Heart left ventricle (tissue), 16 donors: ENCODE measurements at regions of chr2 and their contacts with region 1.

Region 1: GRCh38 chr2:219530048-219530963 is 13.3 kb downstream of the CHPF start:
- DNase-seq: peak; percentile 82 to 92 (median 84)
- ATAC-seq: peak; percentile 69 to 88 (median 82)
- H3K4me3 ChIP-seq: peak overlapping the region in 3 of 12 donors; percentile 15 to 40 (median 26)
- H3K27ac ChIP-seq: no peak overlapping the region
- H3K4me1 ChIP-seq: peaks cover 0 to 26% (median 13%) of the 10 kb centered on the region in 12 donors
- H3K27me3 ChIP-seq: peaks cover 0 to 48% (median 11%) of the 10 kb centered on the region in 9 donors
- CTCF ChIP-seq: peak; percentile 92 to 98 (median 95)
- POLR2A ChIP-seq: no peak

Region 2: DNA sequence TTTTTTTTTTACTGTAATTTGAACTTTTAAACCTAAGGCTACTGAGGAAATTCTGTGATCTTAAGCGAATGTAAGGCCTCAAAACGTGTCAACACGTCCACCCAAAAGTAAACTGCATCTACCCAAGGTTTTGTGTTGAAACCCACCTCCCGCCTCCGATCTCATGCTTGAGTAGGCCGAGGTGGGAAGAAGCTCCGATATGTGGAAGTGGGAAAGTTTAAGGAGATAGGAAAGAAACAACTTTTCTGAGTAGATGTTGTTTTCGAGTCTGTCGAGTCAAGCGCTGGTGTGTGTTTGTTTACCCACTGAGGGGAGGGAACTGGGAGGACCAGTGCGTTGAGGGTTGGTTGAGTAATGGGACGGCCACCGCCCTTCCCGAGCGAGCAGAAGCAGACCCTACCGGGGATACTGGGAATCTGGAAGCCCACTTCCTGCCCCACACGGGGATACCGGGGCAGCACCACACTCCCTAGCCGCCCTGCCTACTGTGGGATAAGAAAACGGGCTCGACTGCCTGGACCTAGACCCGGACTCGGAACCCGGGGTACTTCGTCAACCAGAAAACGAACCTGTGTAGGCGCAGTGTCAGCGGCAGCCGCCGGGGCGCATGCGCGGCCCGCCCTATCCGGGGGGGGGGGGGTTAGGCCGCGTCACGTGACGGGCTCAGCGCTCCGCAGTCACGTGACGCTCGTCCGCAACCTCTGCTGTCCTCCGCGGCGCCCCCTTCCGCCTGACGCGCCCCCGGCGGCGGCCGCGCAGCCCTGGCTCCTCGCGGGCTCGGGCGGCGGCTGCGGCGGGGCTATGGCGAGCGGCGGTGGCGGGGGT is 352.5 kb before region 1 on chr2 and contains the start of gene RETREG2:
- intact Hi-C with region 1: no loop called
- DNase-seq: peak; percentile 86 to 93 (median 89)
- ATAC-seq: peak; percentile 71 to 86 (median 78)
- H3K4me3 ChIP-seq: peak within 1 kb of the TSS; percentile 58 to 99 (median 92)
- H3K27ac ChIP-seq: peak within 1 kb of the TSS; percentile 96 to 100 (median 98)
- H3K4me1 ChIP-seq: peaks cover 5 to 54% (median 27%) of the 10 kb centered on the region in 12 donors
- H3K27me3 ChIP-seq: no peaks in the 10 kb centered on the region
- CTCF ChIP-seq: peak in 10 of 12 donors; percentile 11 to 67 (median 50)
- POLR2A ChIP-seq: peak; percentile 33 to 94
- total RNA-seq, gene RETREG2: 28.3 to 55.8 (median 38.2) TPM

Region 3: GRCh38 chr2:219459460-219460311 is 70.6 kb before region 1 on chr2:
- intact Hi-C with region 1: loop called in 4 of 10 experiments (anchors 1 to 5 kb)
- DNase-seq: peak; percentile 68 to 82 (median 78)
- ATAC-seq: peak; percentile 49 to 69 (median 64)
- H3K4me3 ChIP-seq: peak overlapping the region in 1 of 12 donors; percentile 17
- H3K27ac ChIP-seq: peak overlapping the region; percentile 66 to 99 (median 92)
- H3K4me1 ChIP-seq: peaks cover 0 to 68% (median 12%) of the 10 kb centered on the region in 12 donors
- H3K27me3 ChIP-seq: peaks cover 0 to 9% (median 0%) of the 10 kb centered on the region in 9 donors
- CTCF ChIP-seq: peak; percentile 77 to 90 (median 86)
- POLR2A ChIP-seq: no peak

Region 4: DNA sequence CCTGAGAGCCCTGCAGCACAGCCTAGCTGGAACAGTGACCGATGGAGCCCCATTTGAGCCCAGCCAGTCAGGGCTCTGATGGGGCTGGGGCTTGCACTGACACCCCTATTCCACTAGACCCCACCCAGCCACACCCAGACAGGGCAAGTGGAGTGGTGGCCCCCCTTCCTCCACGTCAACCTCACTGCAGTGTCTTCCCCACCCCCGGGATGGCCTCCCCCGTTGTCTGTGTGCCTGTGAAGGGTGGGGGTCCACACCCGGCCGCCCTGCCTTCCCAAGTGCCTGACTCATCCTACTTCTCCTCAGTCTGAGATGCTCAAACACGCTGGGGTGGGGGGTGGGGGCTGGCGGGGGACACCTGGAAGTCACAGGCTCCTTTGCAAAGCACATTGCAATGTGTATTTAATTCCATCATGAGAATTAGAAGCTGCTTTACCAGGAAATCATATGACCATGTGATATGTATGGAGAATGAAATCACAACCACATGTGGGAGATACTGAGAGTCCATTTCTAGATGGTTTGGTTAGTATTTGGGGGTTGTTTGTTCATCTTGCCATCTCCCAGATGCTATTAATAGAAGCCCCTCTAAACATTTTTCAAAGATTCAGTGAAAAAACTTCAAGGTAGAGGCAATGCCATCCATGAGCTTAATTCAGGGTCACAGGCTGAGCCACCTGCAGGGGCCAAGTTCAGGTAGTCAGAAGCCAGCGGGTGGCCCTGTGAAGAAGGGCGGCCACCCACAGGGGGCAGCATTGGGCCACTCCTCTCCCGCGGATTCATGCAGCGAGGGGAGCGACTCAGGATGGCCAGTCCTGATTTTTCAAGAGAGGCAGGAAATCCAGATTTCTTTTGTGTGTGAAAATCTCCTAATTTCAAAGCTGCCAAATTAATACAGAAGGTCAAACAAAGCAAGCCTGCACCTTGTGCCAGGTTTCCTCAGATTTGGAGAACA is 54.3 kb before region 1 on chr2:
- intact Hi-C with region 1: loop called in 9 of 10 experiments (anchors 1 to 5 kb)
- DNase-seq: peak in 4 of 5 donors; percentile 67 to 79 (median 68)
- ATAC-seq: peak in 3 of 4 donors; percentile 31 to 67 (median 60)
- H3K4me3 ChIP-seq: no peak overlapping the region
- H3K27ac ChIP-seq: peak overlapping the region in 7 of 12 donors; percentile 25 to 72 (median 63)
- H3K4me1 ChIP-seq: peaks cover 0 to 31% (median 0%) of the 10 kb centered on the region in 12 donors
- H3K27me3 ChIP-seq: no peaks in the 10 kb centered on the region
- CTCF ChIP-seq: peak; percentile 79 to 90 (median 86)
- POLR2A ChIP-seq: no peak

Region 5: GRCh38 chr2:219490186-219490585 is 40.1 kb before region 1 on chr2:
- intact Hi-C with region 1: loop called in 4 of 10 experiments (anchors 1 to 5 kb)
- DNase-seq: no peak
- ATAC-seq: no peak
- H3K4me3 ChIP-seq: no peak overlapping the region
- H3K27ac ChIP-seq: peak overlapping the region in 3 of 12 donors; percentile 24 to 60 (median 54)
- H3K4me1 ChIP-seq: peaks cover 0 to 45% (median 2%) of the 10 kb centered on the region in 12 donors
- H3K27me3 ChIP-seq: peaks cover 0 to 27% (median 3%) of the 10 kb centered on the region in 9 donors
- CTCF ChIP-seq: peak in 1 of 12 donors; percentile 15
- POLR2A ChIP-seq: no peak

Region 6: DNA sequence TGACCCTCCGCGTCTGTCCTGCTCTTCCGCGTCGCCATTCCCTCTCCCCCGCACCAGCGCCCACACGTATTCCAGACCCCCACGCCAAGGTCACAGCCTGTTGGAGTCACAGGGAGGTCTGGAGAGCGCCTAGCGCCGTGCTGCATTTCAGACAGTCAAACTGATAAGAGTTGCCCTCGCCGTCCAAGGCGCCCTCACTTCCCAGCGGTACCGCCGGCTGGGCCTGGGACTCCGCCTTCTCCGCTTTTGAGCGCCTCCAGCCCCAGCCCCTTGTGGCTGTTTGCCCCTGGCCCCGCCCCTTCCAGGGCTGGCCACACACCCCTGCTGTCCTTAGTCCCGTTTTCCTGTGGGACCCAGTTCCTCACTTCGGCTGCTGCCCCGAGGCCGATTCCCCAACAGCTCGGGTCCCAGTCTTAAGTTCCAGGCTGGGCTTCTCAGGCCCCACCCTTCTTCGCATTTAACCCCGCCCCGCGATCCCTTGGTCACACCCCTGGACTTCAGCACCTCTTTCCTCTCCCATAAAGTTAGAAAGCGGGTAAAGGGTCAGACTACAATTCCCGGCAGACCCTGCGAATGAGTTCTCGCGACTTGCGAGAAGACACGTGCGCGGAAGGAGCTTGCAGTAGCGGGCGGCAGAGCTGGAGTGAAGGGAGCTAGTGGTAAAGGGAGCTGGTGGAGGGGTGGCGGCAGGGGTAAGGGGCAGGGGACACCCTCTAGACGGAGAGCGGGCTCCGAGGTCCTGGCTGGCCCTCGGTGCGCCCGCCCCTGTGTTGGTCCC is 31.8 kb before region 1 on chr2 and contains the start of gene GMPPA:
- intact Hi-C with region 1: loop called in 4 of 10 experiments (anchors 1 to 5 kb)
- DNase-seq: peak; percentile 96 to 98 (median 96)
- ATAC-seq: peak; percentile 86 to 94 (median 88)
- H3K4me3 ChIP-seq: peak within 1 kb of the TSS; percentile 38 to 89 (median 78)
- H3K27ac ChIP-seq: peak within 1 kb of the TSS; percentile 94 to 100 (median 98)
- H3K4me1 ChIP-seq: peaks cover 0 to 50% (median 35%) of the 10 kb centered on the region in 12 donors
- H3K27me3 ChIP-seq: peaks cover 0 to 37% (median 0%) of the 10 kb centered on the region in 9 donors
- CTCF ChIP-seq: peak in 1 of 12 donors; percentile 31
- POLR2A ChIP-seq: peak in 1 of 2 donors; percentile 61
- total RNA-seq, gene GMPPA: 15.8 to 31.6 (median 20.1) TPM

Region 7: DNA sequence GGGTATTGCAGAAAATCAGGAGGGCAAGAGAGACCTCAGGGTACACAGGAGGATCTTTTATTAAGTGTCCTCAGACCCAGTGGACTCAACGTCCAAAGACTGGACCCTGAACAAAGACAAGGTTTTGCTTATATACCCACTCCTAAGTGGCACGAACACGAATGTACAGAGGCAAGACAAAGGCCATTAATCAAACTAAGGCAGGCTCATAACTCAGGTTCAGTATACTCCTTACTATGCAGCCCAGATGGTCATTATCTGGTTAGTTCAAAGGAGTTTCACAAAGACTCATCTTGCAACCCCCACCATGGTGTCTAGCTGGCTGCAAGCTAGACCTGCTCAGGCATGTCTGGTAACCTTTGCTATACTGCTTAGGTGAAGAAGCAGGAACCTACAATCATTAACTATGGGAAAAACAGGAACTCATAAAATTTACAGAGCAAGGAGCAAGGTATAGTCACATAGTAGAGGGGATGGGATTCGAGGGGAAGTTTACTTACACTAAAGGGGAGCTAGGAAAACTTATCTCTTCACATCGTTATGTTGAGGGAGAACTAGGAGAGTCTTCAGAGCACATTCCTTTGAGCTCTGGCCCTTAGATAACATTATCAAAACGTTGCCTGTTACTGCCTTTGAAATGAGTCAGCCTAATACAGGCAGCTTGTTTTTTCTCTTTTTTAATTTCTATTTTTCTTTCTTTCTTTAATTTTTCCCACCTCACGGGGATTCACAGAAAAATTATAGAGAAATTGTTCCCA is 131.1 kb after region 1 on chr2:
- intact Hi-C with region 1: no loop called
- DNase-seq: no peak
- ATAC-seq: no peak
- H3K4me3 ChIP-seq: no peak overlapping the region
- H3K27ac ChIP-seq: no peak overlapping the region
- H3K4me1 ChIP-seq: peaks cover 0 to 17% (median 5%) of the 10 kb centered on the region in 12 donors
- H3K27me3 ChIP-seq: no peaks in the 10 kb centered on the region
- CTCF ChIP-seq: no peak
- POLR2A ChIP-seq: no peak